Activated T-helper 2 cell treated with anti-CD3 and anti-CD28 coated beads, Interferon-gamma antibody, Interleukin-2, Interleukin-4, amounts not matched to agents 10 μg/mL and 5 μg/mL and 100 μg/mL, durations not matched to agents 14 hours and 24 hours and 36 hours (primary cell): ENCODE measurements at regions of chr12 and their contacts with region 1.

Region 1: GRCh38 chr12:45234139-45234846 is 18.4 kb downstream of the ANO6 start:
- DNase-seq: no peak
- H3K4me3 Mint-ChIP-seq: no peak overlapping the region
- H3K27ac Mint-ChIP-seq: peak overlapping the region; percentile 76
- H3K4me1 Mint-ChIP-seq: peaks cover 47% of the 10 kb centered on the region
- H3K27me3 Mint-ChIP-seq: no peaks in the 10 kb centered on the region

Region 2: DNA sequence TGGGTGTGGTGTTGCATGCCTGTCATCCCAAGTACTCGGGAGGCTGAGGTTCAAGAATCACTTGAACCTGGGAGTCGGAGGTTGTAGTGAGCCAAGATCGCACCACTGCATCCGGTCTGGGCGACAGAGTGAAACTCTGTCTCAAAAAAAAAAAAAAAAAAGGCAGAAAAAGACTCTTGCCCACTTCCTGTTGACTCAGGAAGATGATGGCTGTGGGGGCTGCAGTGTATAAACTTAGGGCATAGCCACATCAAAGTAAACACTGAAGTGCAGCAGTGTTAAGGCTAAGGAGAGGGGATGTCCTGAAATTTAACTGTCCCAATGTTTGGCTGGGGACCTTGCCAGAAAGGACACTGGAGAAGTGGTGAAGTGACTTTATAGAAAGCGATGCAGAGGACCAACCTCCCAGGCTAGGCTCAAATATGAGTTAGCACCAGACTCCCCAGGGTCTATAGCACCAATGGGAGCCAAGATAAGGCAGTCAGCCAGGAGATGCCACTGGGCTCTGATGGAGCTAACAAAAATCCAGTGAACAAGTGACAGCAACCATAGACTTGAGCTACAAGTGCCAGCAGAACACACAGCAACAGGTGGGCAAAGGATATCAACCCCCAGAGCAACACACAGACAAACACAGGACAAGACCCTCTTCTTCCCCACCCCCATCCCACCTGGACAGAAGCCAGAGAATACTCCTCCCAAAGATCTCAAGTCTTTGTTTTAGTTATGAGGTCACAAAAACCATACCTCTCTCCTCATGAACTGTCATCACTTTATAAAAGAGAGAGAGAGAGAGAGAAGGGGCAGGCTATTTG is 386.2 kb before region 1 on chr12:
- intact Hi-C with region 1: loop called (anchors 10 kb)
- DNase-seq: peak; percentile 60
- H3K4me3 Mint-ChIP-seq: peak overlapping the region; percentile 46
- H3K27ac Mint-ChIP-seq: peak overlapping the region; percentile 90
- H3K4me1 Mint-ChIP-seq: peaks cover 60% of the 10 kb centered on the region
- H3K27me3 Mint-ChIP-seq: no peaks in the 10 kb centered on the region

Region 3: DNA sequence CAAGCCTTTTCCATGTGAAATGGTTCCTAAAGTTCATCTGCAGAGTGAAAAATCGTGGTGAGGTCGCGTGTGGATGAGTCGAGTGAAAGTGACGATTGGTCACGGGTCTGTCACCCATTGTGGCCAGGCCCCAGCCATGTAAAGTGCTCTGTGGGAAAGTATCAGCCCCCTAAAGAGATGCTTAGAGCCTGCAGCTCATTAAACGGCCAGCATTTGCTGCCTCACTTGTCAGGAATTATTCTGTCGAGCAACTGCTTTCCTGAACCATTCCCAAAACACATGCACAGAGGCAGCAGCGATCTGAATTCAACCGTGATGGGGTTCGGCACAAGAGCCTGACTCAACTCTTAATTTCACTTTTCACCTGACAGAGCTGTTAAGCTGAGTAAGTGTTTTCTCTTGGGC is 199.4 kb before region 1 on chr12:
- intact Hi-C with region 1: no loop called
- DNase-seq: no peak
- H3K4me3 Mint-ChIP-seq: no peak overlapping the region
- H3K27ac Mint-ChIP-seq: no peak overlapping the region
- H3K4me1 Mint-ChIP-seq: no peaks in the 10 kb centered on the region
- H3K27me3 Mint-ChIP-seq: no peaks in the 10 kb centered on the region

Region 4: DNA sequence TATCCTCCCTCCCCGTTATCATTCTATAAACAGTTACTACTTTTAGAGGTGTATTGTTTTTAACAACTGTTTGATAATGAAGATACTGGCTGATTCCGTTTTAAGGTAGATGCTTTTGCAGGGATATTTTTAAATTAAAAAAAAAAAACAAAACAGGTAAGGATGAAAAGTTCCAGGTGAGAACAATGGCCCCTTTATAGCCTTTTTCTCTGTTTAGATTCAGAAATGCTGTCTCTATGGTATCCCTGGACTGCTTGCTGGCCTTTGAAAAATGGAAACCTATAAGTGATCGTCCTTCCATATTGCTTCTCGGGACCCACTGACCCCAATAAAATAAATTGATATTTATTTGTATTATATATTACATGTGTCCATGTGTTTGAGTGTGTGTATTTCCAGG is 41.6 kb before region 1 on chr12:
- intact Hi-C with region 1: loop called (anchors 1 kb)
- DNase-seq: no peak
- H3K4me3 Mint-ChIP-seq: no peak overlapping the region
- H3K27ac Mint-ChIP-seq: no peak overlapping the region
- H3K4me1 Mint-ChIP-seq: peaks cover 19% of the 10 kb centered on the region
- H3K27me3 Mint-ChIP-seq: no peaks in the 10 kb centered on the region

Region 5: GRCh38 chr12:45215419-45216229 is 18.7 kb before region 1 on chr12 and contains the start of gene ANO6:
- intact Hi-C with region 1: loop called (anchors 1 kb)
- DNase-seq: peak; percentile 74
- H3K4me3 Mint-ChIP-seq: peak within 1 kb of the TSS; percentile 97
- H3K27ac Mint-ChIP-seq: peak within 1 kb of the TSS; percentile 95
- H3K4me1 Mint-ChIP-seq: peaks cover 34% of the 10 kb centered on the region
- H3K27me3 Mint-ChIP-seq: no peaks in the 10 kb centered on the region
- total RNA-seq, gene ANO6: 25.2 and 25.7 TPM in 2 replicates

Region 6: GRCh38 chr12:45244561-45245343 is 10.5 kb after region 1 on chr12:
- intact Hi-C with region 1: loop called (anchors 1 kb)
- DNase-seq: no peak
- H3K4me3 Mint-ChIP-seq: no peak overlapping the region
- H3K27ac Mint-ChIP-seq: no peak overlapping the region
- H3K4me1 Mint-ChIP-seq: peaks cover 15% of the 10 kb centered on the region
- H3K27me3 Mint-ChIP-seq: no peaks in the 10 kb centered on the region

Region 7: DNA sequence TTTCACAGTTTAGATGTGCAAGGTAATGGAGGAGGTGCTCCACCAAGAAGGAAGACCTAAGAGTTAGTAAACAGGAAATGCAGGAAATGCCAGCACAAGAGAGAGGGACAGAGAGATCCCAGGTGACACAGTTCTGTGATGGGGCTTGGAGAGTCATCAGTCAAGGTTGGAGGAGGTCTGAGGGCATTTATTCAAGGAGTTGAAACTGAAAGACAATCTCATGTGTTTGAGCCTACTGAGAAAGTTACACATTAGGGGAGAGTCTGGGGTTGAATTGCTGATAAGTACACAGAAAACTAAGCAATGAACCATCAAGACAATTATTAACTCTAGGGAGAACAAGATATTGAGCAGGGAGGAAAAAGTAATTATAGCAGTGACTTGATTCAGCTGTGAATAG is 120.1 kb after region 1 on chr12:
- intact Hi-C with region 1: loop called (anchors 10 kb)
- DNase-seq: no peak
- H3K4me3 Mint-ChIP-seq: no peak overlapping the region
- H3K27ac Mint-ChIP-seq: peak overlapping the region; percentile 1
- H3K4me1 Mint-ChIP-seq: peaks cover 20% of the 10 kb centered on the region
- H3K27me3 Mint-ChIP-seq: no peaks in the 10 kb centered on the region